MCF 10A (cell line): ENCODE measurements at regions of chr20 and their contacts with region 1.

Region 1: DNA sequence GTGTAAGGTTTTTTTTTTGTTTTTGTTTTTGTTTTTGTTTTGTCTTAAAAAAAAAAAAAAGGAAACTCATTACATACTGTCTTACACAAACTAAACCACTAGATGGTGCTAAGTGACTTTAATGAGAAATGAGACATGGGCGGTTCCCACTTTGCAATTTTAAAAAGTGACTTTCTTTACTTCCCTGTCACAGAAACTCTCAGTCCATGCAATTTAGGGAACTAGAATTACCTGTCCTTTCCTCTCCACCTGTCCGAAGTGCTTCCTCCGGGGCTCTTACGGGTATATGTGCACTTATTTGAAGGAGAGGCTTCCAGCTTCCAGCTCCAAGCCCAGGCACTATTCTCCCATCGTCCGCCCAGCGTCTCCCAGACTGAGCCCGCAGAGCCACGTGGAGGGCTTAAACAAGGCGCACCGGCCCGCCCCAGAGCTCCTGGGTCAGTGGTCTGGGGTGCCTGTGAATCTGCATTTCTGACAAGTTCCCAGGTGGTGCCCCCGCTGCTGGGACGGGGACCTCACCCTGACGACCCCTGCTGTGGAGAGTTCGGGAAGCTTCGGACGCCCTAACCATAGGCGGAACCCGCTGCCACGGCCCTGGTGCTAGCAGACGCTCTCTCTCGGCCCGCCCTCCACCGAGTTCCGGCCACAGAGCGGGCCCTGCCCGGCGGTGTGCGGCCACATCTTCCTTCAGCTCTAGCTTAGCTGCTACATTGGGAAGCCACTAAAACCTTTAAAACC is 26.1 kb downstream of the BFSP1 start:
- DNase-seq: peak; percentile 74
- H3K4me3 Mint-ChIP-seq: peak overlapping the region; percentile 74
- H3K27ac Mint-ChIP-seq: peak overlapping the region; percentile 65
- H3K4me1 Mint-ChIP-seq: peaks cover 17% of the 10 kb centered on the region
- H3K27me3 Mint-ChIP-seq: no peaks in the 10 kb centered on the region
- CTCF ChIP-seq: peak; percentile 50

Region 2: GRCh38 chr20:17403461-17403860 is 101.6 kb before region 1 on chr20:
- CTCF ChIA-PET with region 1: no interaction called
- POLR2A ChIA-PET with region 1: no interaction called
- intact Hi-C with region 1: no loop called
- DNase-seq: no peak
- H3K4me3 Mint-ChIP-seq: no peak overlapping the region
- H3K27ac Mint-ChIP-seq: no peak overlapping the region
- H3K4me1 Mint-ChIP-seq: no peaks in the 10 kb centered on the region
- H3K27me3 Mint-ChIP-seq: peaks cover 71% of the 10 kb centered on the region
- CTCF ChIP-seq: no peak

Region 3: GRCh38 chr20:17525650-17526049 is 20.6 kb after region 1 on chr20:
- CTCF ChIA-PET with region 1: interaction called, 39 read pairs
- POLR2A ChIA-PET with region 1: interaction called, 7 read pairs
- intact Hi-C with region 1: no loop called
- DNase-seq: peak; percentile 48
- H3K4me3 Mint-ChIP-seq: no peak overlapping the region
- H3K27ac Mint-ChIP-seq: no peak overlapping the region
- H3K4me1 Mint-ChIP-seq: peaks cover 2% of the 10 kb centered on the region
- H3K27me3 Mint-ChIP-seq: no peaks in the 10 kb centered on the region
- CTCF ChIP-seq: no peak

Region 4: DNA sequence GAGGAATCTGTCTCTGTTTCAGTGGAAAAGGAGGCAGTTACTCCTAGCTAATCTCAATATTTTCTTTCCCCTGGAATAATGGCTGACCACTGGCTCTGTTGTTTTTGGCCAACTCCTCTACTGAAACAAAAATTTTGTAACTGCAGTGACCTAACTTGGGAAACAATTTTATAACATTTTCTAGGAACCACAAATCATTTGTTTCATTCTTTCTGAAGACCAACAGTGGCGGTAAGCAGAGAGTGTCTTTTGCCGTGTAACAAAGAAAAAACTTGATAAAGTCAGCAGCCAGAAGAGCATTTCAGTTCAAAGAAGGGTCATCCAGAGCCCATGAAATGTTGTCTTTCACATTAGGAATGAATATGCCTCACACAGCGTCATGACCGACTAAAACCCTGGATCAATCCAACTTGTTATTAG is 37.9 kb after region 1 on chr20:
- CTCF ChIA-PET with region 1: interaction called, 15 read pairs
- POLR2A ChIA-PET with region 1: interaction called, 10 read pairs
- intact Hi-C with region 1: no loop called
- DNase-seq: peak; percentile 71
- H3K4me3 Mint-ChIP-seq: no peak overlapping the region
- H3K27ac Mint-ChIP-seq: no peak overlapping the region
- H3K4me1 Mint-ChIP-seq: peaks cover 27% of the 10 kb centered on the region
- H3K27me3 Mint-ChIP-seq: no peaks in the 10 kb centered on the region
- CTCF ChIP-seq: no peak

Region 5: GRCh38 chr20:17594443-17594842 is 89.4 kb after region 1 on chr20:
- CTCF ChIA-PET with region 1: interaction called, 13 read pairs
- POLR2A ChIA-PET with region 1: interaction called, 3 read pairs
- intact Hi-C with region 1: no loop called
- DNase-seq: no peak
- H3K4me3 Mint-ChIP-seq: no peak overlapping the region
- H3K27ac Mint-ChIP-seq: no peak overlapping the region
- H3K4me1 Mint-ChIP-seq: peaks cover 49% of the 10 kb centered on the region
- H3K27me3 Mint-ChIP-seq: no peaks in the 10 kb centered on the region
- CTCF ChIP-seq: no peak

Region 6: GRCh38 chr20:17617551-17618223 is 112.6 kb after region 1 on chr20:
- CTCF ChIA-PET with region 1: interaction called, 78 read pairs
- POLR2A ChIA-PET with region 1: no interaction called
- intact Hi-C with region 1: no loop called
- DNase-seq: peak; percentile 51
- H3K4me3 Mint-ChIP-seq: no peak overlapping the region
- H3K27ac Mint-ChIP-seq: no peak overlapping the region
- H3K4me1 Mint-ChIP-seq: peaks cover under 1% of the 10 kb centered on the region
- H3K27me3 Mint-ChIP-seq: no peaks in the 10 kb centered on the region
- CTCF ChIP-seq: peak; percentile 66

Region 7: DNA sequence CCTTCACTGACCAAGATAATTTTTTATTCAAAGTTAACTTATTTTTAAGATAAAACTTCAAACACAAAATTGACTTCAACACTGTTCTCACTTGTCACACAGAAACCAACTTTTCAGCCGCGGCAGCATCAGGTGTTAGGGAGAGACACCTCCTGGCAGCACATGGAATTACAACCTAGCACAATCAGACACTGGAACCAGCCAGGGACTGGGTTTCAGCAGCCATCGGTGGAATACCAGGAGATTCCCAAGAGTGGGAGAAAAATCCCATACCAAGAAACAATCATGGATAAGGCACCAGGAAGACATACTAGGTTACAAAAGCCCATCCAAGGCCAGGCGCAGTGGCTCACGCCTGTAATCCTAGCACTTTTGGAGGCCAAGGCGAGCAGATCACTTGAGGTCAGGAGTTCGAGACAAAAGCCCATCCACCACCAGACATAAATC is 393.5 kb after region 1 on chr20:
- CTCF ChIA-PET with region 1: interaction called, 99 read pairs
- POLR2A ChIA-PET with region 1: interaction called, 8 read pairs
- intact Hi-C with region 1: loop called (anchors 1 kb)
- DNase-seq: peak; percentile 78
- H3K4me3 Mint-ChIP-seq: no peak overlapping the region
- H3K27ac Mint-ChIP-seq: no peak overlapping the region
- H3K4me1 Mint-ChIP-seq: peaks cover 21% of the 10 kb centered on the region
- H3K27me3 Mint-ChIP-seq: no peaks in the 10 kb centered on the region
- CTCF ChIP-seq: peak; percentile 91

Region 8: GRCh38 chr20:17995967-17996819 is 491.1 kb after region 1 on chr20:
- CTCF ChIA-PET with region 1: interaction called, 47 read pairs
- POLR2A ChIA-PET with region 1: interaction called, 5 read pairs
- intact Hi-C with region 1: loop called (anchors 1 kb)
- DNase-seq: peak; percentile 75
- H3K4me3 Mint-ChIP-seq: no peak overlapping the region
- H3K27ac Mint-ChIP-seq: no peak overlapping the region
- H3K4me1 Mint-ChIP-seq: peaks cover 14% of the 10 kb centered on the region
- H3K27me3 Mint-ChIP-seq: no peaks in the 10 kb centered on the region
- CTCF ChIP-seq: peak; percentile 89